Tibial artery (tissue), 4 donors: ENCODE measurements at regions of chr2 and their contacts with region 1.

Region 1: DNA sequence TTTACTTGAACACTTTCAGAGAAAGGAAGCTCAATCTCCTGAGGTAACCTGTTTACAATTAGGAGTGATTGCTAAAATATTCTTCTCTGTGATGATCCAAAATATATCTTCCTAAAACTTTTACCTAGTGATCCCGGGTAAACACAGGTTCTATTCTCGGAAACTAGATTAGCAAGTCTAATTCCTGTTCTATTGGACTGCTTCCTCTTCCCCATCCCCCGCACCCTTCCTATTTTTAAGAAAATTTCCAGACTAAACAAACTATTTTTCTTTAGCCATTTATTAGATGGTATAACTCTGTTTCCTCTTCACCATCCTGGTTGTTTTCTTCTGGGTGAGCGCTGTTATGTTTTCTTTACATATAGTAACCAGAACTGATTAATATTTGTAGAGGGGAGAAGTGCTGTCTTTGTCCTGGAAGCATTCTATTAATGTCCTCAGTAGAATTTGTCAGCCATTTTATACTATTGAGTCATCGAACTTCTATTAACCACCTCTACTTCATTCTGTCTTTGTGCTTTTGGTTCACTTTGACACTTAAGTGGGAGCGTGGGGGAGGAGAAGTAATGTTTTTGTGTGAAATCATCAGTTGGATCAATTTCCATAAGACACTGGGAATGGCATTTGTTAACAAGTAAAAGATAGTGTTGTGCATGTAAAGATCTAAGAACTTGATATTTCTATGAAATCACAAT is 31.8 kb downstream of the CREB1 start:
- DNase-seq: no peak
- H3K4me3 ChIP-seq: no peak overlapping the region
- H3K27ac ChIP-seq: no peak overlapping the region
- H3K4me1 ChIP-seq: peaks cover 0 to 5% (median 1%) of the 10 kb centered on the region in 4 donors
- H3K27me3 ChIP-seq: no peaks in the 10 kb centered on the region
- CTCF ChIP-seq: no peak

Region 2: DNA sequence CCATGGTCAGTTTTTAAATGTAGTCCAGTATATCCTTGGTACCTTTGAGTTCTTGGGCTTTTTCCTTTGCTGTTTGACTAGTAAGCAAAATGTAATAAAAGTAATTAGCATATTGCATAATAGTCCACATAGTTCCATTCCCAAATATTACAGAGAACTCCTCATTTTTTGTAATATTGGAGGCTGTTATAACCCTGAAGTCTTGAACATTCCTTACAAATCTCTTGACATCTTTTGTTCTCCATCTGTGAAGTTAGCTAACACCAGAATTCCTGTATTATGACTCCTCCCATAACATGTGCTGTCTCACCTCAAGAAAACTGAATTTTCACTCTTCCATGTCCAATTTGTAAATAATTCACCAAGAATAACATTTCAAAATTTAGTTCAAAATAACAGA is 14.7 kb before region 1 on chr2:
- intact Hi-C with region 1: loop called (anchors 1 kb)
- DNase-seq: no peak
- H3K4me3 ChIP-seq: no peak overlapping the region
- H3K27ac ChIP-seq: no peak overlapping the region
- H3K4me1 ChIP-seq: peaks cover 6 to 46% (median 14%) of the 10 kb centered on the region in 4 donors
- H3K27me3 ChIP-seq: no peaks in the 10 kb centered on the region
- CTCF ChIP-seq: no peak

Region 3: GRCh38 chr2:209016207-209016606 is 1454.7 kb after region 1 on chr2:
- intact Hi-C with region 1: no loop called
- DNase-seq: no peak
- H3K4me3 ChIP-seq: no peak overlapping the region
- H3K27ac ChIP-seq: no peak overlapping the region
- H3K4me1 ChIP-seq: no peaks in the 10 kb centered on the region
- H3K27me3 ChIP-seq: no peaks in the 10 kb centered on the region
- CTCF ChIP-seq: no peak